Motor neuron (in vitro differentiated cells): ENCODE measurements at regions of chr9 and their contacts with region 1.

Region 1: DNA sequence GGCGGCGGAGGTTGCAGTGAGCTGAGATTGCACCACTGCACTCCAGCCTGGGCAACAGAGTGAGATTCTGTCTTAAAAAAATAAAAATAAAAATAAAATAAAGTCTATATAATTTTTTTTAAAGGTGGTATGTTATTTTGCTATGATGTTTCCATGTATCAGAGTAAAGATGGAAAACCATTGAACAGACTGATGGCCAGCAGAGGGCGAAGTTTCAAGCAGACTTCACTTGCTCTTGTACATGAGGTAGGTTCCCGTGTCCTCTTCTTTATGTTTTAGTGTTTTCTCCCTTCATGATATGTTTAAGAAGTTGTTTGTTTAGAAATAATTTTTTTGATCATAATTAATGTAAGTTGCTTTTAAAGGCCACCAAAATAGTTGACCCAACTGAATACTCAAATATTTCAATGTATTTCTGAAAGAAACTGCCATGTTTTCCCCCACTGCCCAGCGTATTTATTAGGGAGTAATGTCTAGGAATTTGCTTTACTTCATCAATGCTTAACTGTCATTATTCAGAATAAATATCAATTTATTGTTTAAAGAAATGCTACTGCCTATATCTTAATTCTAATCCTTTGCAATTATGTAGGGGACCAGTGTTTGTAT is 146.4 kb downstream of the HACD4 start:
- ATAC-seq: peak in 3 of 8 experiments; percentile 48 to 54 (median 49)
- H3K4me3 ChIP-seq: no peak overlapping the region
- H3K27ac ChIP-seq: no peak overlapping the region
- H3K4me1 ChIP-seq: no peaks in the 10 kb centered on the region

Region 2: DNA sequence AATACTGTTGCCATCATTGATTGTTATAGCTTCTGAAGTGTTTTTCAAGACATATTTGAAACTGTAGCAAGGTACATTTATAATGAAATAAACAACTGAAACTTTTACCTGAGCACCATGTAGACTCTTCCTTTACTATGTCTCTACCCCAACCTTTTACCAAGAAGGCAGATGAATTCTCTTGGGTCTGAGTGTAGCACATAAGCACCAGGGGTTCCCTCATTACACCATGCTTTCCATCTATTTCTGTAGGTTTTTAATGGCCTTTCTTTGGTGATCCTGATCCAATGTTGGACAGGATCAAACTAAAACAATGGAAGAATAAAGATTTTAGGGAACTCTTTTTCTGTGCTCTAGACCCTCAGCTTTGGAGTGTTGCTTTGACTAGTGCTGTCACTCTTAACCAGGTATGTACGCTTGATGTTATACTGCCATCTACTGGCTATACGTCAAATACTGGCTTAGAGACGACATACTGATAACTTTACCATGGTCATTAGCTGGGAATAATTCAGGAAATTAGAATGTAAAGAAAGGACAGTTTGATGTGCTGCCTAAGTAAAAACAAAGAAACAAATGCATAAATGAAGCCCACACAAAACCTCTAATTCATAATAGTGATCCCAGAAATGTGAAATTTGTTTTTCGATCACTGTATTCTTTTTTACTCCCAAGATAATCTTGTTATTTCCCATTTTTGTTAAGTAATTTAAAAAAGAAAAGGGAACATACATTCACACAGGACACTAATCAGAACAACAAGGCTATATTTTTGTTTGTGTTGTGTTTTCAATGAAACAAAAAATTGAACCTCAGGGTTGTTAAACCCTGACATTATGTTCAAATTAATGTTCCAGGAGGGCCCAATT is 225.9 kb after region 1 on chr9:
- in situ Hi-C with region 1: loop called in 1 of 9 experiments (anchors 25 kb)
- ATAC-seq: peak; percentile 75 to 99 (median 90)
- H3K4me3 ChIP-seq: no peak overlapping the region
- H3K27ac ChIP-seq: no peak overlapping the region
- H3K4me1 ChIP-seq: no peaks in the 10 kb centered on the region